IMR-90 (cell line): ENCODE measurements at regions of chr16 and their contacts with region 1.

Region 1: DNA sequence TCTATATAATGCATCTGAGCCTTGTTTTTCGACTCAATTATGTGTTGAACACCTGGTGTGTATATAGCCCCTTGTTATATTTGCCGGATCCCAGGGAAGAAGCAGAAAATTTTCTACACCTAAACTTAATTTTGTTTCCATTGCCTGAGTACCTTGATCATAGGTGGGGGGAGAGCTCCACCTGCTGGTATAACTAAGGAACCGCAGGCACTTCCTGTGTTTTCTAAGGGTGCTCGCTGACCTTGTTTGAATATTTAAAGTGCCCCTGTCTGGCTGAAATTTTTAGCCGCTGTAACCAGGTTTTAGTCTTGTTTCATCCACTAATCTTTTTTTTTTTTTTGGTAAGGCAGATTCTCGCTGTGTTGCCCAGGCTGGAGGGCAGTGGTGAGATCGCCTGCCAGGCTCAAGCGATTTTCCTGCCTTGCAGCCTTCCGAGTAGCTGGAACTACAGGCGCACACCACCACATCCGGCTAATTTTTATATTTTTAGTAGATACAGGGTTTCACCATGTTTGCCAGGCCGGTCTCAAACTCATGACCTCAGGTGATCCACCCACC is 6.5 kb upstream of the NUBP1 start:
- DNase-seq: peak; percentile 61
- ATAC-seq: peak; percentile 89
- H3K4me3 ChIP-seq: no peak overlapping the region
- H3K27ac ChIP-seq: no peak overlapping the region
- H3K4me1 ChIP-seq: peaks cover 2% of the 10 kb centered on the region; the same call in 1 of the 2 replicates
- H3K27me3 ChIP-seq: no peaks in the 10 kb centered on the region
- CTCF ChIP-seq: peak; percentile 96
- POLR2A ChIP-seq: 0 out of 2 replicates have a peak, but pooled peaks have one; percentile 26
- RAD21 ChIP-seq: peak; percentile 96

Region 2: DNA sequence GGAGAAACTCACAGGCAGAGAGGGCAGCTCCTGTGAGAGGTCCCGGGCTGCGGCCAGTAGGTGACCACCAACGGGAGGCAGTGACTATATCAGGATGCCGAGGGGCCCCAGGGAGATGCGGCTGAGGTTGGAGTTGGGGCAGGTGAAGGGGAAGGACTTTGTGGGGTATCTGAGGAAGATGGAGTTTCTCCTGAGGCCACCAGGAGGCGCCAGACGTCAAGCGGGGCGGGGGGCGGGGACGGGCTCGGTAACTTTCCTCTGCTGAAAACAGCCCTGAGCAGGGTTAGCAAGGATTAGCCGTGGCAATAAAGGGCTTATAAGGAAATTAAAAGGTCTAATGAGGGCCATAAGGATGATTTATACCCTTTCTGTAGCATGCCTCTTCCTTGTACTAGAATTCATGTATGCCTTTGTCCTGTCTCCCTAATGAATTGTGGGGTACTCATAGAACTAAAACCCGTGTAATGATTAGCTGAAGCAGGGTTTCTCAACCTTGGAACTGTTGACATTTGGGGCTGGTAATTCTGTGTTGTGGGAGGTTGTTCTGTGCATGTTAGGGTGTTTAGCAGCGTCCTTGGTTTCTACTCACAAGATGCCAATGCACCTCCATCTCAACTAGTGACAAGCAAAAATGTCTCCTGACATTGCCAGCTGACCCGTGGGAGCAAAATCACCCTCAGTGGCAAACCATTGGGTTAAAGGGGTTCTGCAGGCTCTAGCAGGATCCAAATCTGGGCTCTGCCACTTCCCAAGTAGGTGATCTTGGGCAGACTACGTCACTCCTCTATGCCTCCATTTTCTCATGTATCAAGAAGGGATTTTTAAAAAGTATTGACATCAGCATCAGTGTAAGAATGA is 480.1 kb before region 1 on chr16:
- CTCF ChIA-PET with region 1: no interaction called
- POLR2A ChIA-PET with region 1: no interaction called
- dilution Hi-C with region 1: no loop called
- in situ Hi-C with region 1: loop called (anchors 5 kb)
- intact Hi-C with region 1: loop called (anchors 2 kb)
- DNase-seq: no peak
- ATAC-seq: peak; percentile 59
- H3K4me3 ChIP-seq: no peak overlapping the region
- H3K27ac ChIP-seq: no peak overlapping the region
- H3K4me1 ChIP-seq: no peaks in the 10 kb centered on the region
- H3K27me3 ChIP-seq: no peaks in the 10 kb centered on the region
- CTCF ChIP-seq: peak; percentile 63
- POLR2A ChIP-seq: no peak
- RAD21 ChIP-seq: peak; percentile 55

Region 3: GRCh38 chr16:10521681-10522274 is 215.4 kb before region 1 on chr16:
- CTCF ChIA-PET with region 1: interaction called, 11 read pairs
- POLR2A ChIA-PET with region 1: interaction called, 5 read pairs
- dilution Hi-C with region 1: no loop called
- in situ Hi-C with region 1: loop called (anchors 5 kb)
- intact Hi-C with region 1: loop called (anchors 1 kb)
- DNase-seq: peak; percentile 68
- ATAC-seq: peak; percentile 98
- H3K4me3 ChIP-seq: no peak overlapping the region
- H3K27ac ChIP-seq: no peak overlapping the region
- H3K4me1 ChIP-seq: no peaks in the 10 kb centered on the region
- H3K27me3 ChIP-seq: no peaks in the 10 kb centered on the region
- CTCF ChIP-seq: peak; percentile 88
- POLR2A ChIP-seq: no peak
- RAD21 ChIP-seq: peak; percentile 81